Sciatic nerve (tissue), 2 donors: ENCODE measurements at regions of chr11 and their contacts with region 1.

Region 1: DNA sequence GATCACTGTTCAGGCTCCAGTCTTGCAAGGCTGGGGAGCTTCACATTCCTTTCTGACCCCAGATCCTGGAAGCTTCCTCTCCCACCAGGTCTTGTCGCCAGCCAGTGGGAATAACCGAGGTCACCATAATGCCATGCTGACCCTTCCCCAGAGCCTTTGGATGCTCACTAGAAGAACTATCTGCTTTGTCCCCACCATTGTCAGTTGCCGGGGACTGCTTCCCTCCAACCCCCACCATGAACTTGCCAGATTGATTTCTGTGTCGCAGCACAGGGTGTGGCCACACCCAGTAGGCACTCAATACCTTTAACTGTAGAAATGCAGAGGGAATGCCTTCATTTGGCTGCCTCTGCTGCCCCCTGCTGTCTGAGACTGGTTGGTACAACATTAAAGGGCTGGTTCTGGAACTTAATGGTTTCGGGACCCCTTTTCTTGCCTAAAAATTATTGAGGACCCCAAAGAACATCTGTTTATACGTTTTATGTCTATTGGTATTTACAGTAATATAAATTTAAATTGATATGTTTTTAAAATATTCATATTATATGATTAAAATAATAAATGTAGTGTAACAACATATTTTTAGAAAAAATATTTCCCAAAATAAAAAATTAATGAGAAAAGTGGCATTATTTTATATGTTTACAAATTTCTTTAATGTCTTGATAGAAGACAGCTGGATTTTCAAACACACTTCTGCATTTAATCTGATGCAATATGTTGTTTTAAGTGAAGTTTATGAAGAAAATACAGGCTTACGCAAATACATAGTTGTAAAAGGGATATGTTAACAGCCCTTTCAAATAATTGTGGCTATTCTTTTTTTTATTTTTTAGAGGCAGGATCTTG is 6.7 kb upstream of the GDPD5 start:
- DNase-seq: peak; percentile 85
- ATAC-seq: peak; percentile 64

Region 2: GRCh38 chr11:75394085-75394840 is 138.2 kb before region 1 on chr11:
- intact Hi-C with region 1: loop called (anchors 5 kb)
- DNase-seq: no peak
- ATAC-seq: no peak

Region 3: GRCh38 chr11:75447415-75447814 is 85.0 kb before region 1 on chr11:
- intact Hi-C with region 1: loop called (anchors 2 kb)
- DNase-seq: no peak
- ATAC-seq: no peak